ENCODE measurements at regions of chr20 and their contacts with region 1.

Region 1: DNA sequence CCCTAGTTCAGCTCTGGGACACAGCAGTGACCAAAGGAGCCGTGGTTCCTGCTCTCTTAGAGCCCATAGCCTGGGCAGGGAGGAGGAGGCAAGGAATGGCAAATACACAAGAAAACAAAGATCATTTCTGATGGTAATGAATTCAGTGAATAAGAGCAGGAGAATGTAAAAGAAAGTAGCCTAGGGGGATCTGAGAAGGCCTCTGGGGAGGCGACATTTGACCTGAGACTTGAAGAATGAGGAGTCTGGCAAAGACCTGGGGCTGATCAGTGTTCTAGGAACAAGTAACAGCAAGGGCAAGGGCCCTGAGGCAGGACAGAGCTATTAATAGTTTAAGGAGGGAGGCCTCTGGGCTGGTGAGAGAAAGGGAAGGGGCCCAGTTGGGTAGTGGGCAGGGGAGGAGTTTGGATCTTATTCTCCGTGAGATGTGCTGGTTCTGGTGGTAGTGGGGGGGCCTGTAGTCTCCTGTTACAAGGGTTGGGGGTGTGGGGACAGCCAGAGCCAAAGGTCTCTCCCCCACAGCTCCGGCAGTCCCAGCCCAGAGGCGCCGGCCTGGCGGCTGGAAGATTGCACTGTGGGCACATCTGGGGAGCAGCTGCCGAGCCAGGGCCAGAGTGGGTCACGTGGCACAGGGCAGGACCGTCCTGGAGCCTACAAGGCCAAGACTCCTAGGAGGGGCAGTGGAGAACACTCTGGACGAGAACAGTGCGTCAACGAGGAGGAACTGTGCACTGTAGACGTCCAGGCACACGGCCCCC is 9.3 kb upstream of the ID1 start:
- DNase-seq: peak; percentile 54
- H3K27ac ChIP-seq: peak overlapping the region; percentile 94
- CTCF ChIP-seq: no peak

Region 2: DNA sequence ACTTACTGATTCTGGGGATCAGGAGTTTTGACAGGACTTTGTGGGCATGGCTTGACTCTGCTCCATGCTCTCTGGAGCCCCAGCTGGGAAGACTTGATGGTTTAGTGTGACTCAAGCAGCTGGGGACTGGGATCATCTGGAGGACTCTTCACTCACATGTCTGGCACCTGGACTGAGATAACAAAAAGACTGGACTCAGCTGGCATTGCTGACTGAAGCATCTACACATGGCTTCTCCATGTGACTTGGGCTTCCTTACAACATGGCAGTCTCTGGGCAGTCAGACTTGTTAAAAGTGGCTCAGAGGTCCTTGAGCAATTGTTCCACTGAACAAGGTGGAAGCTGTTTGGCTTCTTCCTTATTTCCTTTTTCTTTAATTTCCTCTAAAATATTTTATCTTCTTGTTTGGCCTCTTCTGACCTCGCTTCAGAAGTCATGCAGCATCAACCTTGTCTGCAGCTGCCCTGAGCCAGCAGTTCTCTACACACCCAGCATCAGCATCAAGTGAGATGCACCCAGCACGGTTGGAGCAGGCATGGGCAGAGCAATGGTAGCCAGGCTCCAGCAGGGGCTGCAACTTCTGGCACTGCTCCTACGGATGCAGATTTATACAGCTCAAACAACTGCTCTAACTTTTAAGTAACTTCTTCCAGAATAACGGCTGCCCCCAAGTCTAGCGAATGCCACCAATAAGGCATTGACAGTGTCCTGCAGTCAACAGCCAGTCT is 87.2 kb before region 1 on chr20:
- CTCF ChIA-PET with region 1: no interaction called
- POLR2A ChIA-PET with region 1: no interaction called
- DNase-seq: no peak
- H3K27ac ChIP-seq: no peak overlapping the region
- CTCF ChIP-seq: no peak

Region 3: DNA sequence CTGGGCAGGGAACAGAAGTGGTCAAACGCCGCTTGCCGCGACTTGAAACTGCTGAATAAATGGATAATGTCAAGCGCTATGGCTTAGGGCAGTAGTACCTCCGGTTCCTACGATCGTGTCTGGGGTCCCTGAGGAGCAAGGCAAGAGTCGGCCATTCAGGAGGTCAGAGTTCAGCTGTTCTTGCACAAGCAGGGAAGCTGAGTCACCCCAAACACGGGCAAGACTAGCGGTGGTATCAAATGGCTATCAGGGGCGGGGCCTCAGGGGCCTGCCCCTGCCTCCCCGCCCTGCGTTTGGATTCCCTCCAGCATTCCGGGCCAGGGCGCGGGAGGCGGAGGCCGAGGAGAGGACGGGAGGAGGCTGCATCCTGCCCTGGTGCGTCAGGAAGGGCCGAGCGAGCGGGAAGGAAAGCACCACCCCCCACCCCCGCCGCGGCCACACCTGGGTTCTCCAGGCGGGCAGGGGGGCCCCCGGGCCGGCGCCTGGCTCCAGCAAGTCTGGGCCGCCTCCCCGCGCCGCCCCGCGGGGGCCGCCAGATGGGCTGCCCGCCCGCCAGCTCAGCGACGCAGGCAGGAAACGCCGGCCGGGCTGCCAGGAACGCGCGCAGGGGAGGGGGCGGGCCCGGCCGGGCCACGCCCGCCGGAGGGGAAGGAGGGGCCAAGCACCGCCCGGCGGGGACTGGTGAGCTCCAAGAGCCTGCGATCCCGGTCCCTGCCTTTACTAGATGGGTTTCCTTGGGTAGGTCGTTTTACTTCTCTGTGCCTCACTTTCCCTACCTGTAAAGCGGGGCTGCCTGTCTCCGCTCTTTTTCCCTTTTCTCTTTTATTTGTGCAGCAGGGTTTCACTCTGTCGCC is 22.9 kb before region 1 on chr20:
- CTCF ChIA-PET with region 1: interaction called, 12 read pairs
- POLR2A ChIA-PET with region 1: interaction called, 42 read pairs
- DNase-seq: peak; percentile 99
- H3K27ac ChIP-seq: peak overlapping the region; percentile 93
- CTCF ChIP-seq: no peak